Kidney (tissue), 22 donors: ENCODE measurements at regions of chr9 and their contacts with region 1.

Region 1: DNA sequence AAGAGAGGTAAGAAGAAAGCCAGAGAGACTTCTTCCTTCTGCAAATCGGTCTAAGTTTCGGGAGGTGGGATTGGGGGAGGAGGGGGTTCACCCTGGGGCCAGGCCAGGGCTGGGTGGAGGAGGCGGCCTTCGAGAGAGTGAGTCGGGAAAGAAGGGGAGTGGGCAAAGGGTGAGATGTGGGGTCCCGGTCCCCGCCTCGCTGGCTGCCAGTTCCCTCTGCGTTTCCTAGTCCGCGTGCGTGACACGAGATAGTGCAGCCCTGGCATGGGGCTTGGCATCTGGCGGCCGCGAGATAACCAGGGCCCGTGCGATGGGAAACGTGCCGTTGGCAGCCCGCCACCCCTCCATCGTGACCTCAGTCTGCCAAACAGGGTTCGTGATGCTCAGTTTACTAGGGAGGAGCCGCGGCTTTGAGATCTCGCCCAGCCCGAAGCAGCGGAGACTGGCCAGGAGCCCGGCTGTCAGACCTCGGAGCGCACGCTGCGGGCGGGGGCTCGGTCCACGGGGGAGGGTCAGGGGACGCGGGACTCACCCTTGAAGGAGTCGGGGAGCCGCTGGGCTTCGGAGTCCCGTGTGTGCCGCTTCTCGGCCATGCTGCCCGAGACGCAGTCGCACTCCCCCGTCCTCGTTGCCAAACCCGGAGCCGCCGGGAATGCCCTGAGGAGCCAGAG is at the start of gene STOM:
- DNase-seq: peak in 2 of 5 donors; percentile 27 to 95
- H3K4me3 ChIP-seq: peak within 1 kb of the TSS; percentile 66 to 80 (median 68)
- H3K27ac ChIP-seq: peak within 1 kb of the TSS; percentile 91 to 98
- H3K4me1 ChIP-seq: peaks cover 3 to 26% (median 9%) of the 10 kb centered on the region in 3 donors
- H3K27me3 ChIP-seq: no peaks in the 10 kb centered on the region
- CTCF ChIP-seq: peak; percentile 2
- total RNA-seq, gene STOM: 229 TPM

Region 2: GRCh38 chr9:121331992-121332685 is 37.6 kb before region 1 on chr9:
- intact Hi-C with region 1: loop called (anchors 5 kb)
- DNase-seq: peak in 2 of 5 donors; percentile 46 to 83
- H3K4me3 ChIP-seq: no peak overlapping the region
- H3K27ac ChIP-seq: peak overlapping the region; percentile 26 to 62
- H3K4me1 ChIP-seq: no peaks in the 10 kb centered on the region
- H3K27me3 ChIP-seq: no peaks in the 10 kb centered on the region
- CTCF ChIP-seq: no peak